ENCODE measurements at regions of chr18 and their contacts with region 1.

Region 1: DNA sequence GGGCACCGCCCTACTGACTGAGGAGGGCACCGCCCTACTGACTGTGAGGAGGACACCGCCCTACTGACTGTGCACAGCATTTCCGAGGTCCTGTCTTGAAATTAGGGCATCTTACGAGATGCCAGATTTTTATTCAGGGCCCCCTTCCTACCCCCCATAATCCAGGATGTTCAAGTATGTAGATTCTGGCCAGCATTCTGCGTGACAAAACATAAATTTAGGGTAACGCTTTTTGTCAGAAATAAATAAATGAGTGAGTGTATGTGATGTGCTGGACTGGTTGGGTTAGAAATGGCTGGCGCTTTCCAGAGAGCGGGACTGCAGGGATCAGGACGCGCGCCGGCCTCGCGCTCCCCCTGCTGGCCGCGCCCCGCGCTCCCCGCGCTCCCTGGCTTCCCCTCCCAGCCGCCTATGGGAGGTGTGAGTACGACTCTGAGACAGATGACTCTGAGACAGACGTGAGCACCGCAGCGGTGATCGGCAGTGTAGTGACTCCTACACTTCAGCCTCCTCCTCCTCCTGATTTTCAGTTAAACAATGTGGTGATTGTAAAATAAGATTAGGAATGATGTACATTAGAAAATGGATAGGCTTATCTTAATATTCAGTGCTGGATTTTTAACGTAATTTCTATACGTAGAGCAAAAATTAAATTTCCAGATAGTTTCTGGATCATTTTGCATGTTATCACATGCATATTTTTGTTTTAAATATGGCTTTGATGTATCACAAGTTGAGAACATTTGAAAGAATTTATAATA is 149.2 kb upstream of the NFATC1 start:
- DNase-seq: peak; percentile 8 to 53
- ATAC-seq: peak; percentile 79 to 89
- H3K4me3 ChIP-seq: peak overlapping the region in 1 of 4 donors; percentile 22
- H3K27ac ChIP-seq: no peak overlapping the region
- H3K4me1 ChIP-seq: peaks cover 4 to 12% of the 10 kb centered on the region in 2 donors
- H3K27me3 ChIP-seq: no peaks in the 10 kb centered on the region
- CTCF ChIP-seq: peak; percentile 70 to 98 (median 87)
- POLR2A ChIP-seq: no peak

Region 2: DNA sequence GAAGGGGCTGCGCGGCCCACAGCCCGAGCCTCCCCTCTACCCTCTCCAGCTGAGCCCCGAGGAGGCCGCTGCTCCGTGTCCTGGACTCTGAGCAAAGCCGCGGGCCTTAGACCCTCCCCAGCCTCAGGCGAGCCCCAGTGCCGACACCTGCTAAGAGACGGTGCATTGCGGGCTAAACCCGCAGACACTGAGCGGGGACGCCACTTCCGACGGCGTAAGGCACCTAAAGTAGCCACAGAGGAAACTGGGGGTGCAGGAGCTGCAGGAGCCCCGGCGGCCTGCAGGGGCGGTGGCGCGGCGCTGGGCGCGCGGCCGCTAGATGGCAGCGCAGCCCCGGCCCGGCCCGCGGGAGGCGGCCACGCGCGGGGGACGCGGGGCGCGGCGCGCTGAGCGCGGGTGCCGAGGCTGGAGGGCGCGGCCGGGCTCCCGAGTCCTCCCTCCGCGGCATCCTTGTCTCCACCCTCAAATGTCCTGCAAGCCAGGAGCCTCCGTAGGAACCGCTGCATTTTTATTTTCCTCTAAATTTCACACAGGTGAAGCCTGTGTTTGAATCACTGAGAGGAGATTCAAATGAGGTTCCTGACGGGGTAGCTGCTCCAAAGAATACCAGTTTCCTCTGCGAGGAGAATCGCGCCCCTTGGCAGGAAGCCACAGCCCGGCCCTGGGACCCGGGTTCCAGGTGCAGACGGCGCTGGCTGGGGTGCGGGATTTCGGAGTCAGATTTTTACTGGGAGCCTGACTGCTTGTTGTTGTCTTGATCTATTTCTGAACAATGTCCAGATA is 1346.4 kb before region 1 on chr18:
- in situ Hi-C with region 1: no loop called
- intact Hi-C with region 1: loop called (anchors 10 kb)
- DNase-seq: no peak
- ATAC-seq: no peak
- H3K4me3 ChIP-seq: peak overlapping the region in 2 of 4 donors; percentile 22 to 26
- H3K27ac ChIP-seq: no peak overlapping the region
- H3K4me1 ChIP-seq: no peaks in the 10 kb centered on the region
- H3K27me3 ChIP-seq: peaks cover 0 to 3% (median 3%) of the 10 kb centered on the region in 3 donors
- CTCF ChIP-seq: peak; percentile 35 to 55 (median 47)
- POLR2A ChIP-seq: no peak

Region 3: DNA sequence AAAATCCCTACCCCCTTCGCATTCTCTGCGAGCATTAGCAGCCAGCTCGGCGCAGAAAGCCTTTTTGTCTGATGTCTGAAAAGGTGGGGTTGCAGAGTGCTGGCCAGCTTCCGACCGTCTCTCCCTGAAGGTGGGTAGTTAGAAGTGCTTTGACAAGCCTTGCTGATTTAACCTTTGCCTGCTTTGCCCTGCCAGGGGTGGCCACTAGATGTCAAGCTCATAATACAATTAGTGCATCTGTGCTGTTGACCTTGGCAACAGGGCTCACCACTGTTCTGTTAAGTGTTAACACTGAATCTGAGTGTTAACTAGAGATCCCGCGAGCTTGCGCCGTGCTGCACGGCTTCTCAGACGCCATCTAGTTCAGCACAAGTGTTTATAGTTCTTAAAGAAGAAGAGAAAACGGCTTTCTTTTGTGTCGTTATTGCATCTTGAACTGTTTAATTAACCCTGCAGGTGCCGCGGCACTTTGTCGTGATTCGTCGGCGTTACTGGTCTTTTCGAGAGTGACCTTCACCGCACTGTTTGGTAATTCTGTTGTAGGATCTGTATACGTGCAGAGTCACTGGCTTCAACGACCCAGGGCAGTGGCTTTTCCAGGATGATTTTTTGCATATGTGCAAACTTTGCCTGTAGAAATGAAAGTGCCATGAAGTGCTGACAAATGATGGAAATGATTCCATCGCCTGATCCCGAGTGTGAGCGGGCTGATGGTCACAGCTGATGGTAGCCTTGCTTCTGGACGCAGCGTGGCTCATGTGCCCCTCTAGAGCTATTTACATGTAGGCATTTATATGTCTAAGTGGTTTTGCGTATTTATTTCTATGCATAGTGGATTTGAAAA is 261.4 kb before region 1 on chr18:
- in situ Hi-C with region 1: loop called in 2 of 4 experiments (anchors 10 to 25 kb)
- intact Hi-C with region 1: loop called (anchors 5 kb)
- DNase-seq: no peak
- ATAC-seq: no peak
- H3K4me3 ChIP-seq: peak overlapping the region in 1 of 4 donors; percentile 15
- H3K27ac ChIP-seq: no peak overlapping the region
- H3K4me1 ChIP-seq: peaks cover 0 to 5% of the 10 kb centered on the region in 2 donors
- H3K27me3 ChIP-seq: peaks cover 87 to 96% (median 90%) of the 10 kb centered on the region in 3 donors
- CTCF ChIP-seq: no peak
- POLR2A ChIP-seq: no peak

Measured in gastrocnemius medialis (tissue), 4 donors.